Activated B cell treated with CpG ODN at 0.5 μM for 24 hours (primary cell): ENCODE measurements at regions of chr5 and their contacts with region 1.

Region 1: DNA sequence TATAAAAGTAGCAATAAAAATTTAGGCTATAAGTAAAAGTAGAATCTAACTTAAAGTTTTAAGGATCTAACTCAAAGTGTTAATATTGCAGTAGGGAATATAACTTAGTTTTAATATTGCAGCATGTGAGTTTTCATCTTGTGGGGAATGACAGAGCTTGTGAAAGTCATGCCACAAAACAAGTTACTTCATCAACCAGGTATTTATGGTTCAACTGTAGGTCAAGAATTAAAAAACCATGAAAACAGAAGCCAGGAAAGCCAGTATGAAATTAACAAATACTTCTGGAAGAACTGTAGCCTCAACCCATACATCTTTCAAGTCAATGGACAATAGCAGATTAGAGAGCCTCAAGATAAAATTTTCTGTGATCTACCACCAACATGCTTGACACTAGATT is 19.0 kb downstream of the HMGCS1 start:
- DNase-seq: no peak
- ATAC-seq: no peak
- H3K4me3 Mint-ChIP-seq: no peak overlapping the region
- H3K27ac Mint-ChIP-seq: no peak overlapping the region
- H3K4me1 Mint-ChIP-seq: no peaks in the 10 kb centered on the region
- H3K27me3 Mint-ChIP-seq: no peaks in the 10 kb centered on the region
- CTCF ChIP-seq: no peak

Region 2: GRCh38 chr5:43191740-43192557 is 102.3 kb before region 1 on chr5 and contains the start of gene NIM1K:
- CTCF ChIA-PET with region 1: no interaction called
- POLR2A ChIA-PET with region 1: no interaction called
- intact Hi-C with region 1: loop called (anchors 1 kb)
- DNase-seq: peak; percentile 45
- ATAC-seq: peak; percentile 65
- H3K4me3 Mint-ChIP-seq: peak within 1 kb of the TSS; percentile 84
- H3K27ac Mint-ChIP-seq: no peak within 1 kb of the TSS
- H3K4me1 Mint-ChIP-seq: peaks cover 28% of the 10 kb centered on the region
- H3K27me3 Mint-ChIP-seq: peaks cover 19% of the 10 kb centered on the region
- CTCF ChIP-seq: no peak
- total RNA-seq, gene NIM1K: 0.39 and 0.51 TPM in 2 replicates

Region 3: GRCh38 chr5:43415946-43416802 is 121.9 kb after region 1 on chr5:
- CTCF ChIA-PET with region 1: no interaction called
- POLR2A ChIA-PET with region 1: no interaction called
- intact Hi-C with region 1: no loop called
- DNase-seq: no peak
- ATAC-seq: no peak
- H3K4me3 Mint-ChIP-seq: no peak overlapping the region
- H3K27ac Mint-ChIP-seq: no peak overlapping the region
- H3K4me1 Mint-ChIP-seq: no peaks in the 10 kb centered on the region
- H3K27me3 Mint-ChIP-seq: no peaks in the 10 kb centered on the region
- CTCF ChIP-seq: no peak